Activated naive CD4-positive, alpha-beta T cell treated with anti-CD3 and anti-CD28 coated beads for 36 hours (primary cell): ENCODE measurements at regions of chr11 and their contacts with region 1.

Region 1: GRCh38 chr11:46616998-46617675 is at the starts of genes ATG13 and HARBI1:
- DNase-seq: peak; percentile 90
- H3K4me3 Mint-ChIP-seq: peak within 1 kb of the TSS; percentile 89
- H3K27ac Mint-ChIP-seq: peak within 1 kb of the TSS; percentile 99
- H3K4me1 Mint-ChIP-seq: peaks cover 40% of the 10 kb centered on the region
- H3K27me3 Mint-ChIP-seq: no peaks in the 10 kb centered on the region
- total RNA-seq, gene ATG13: 54.7 to 55.6 TPM
- total RNA-seq, gene HARBI1: 2.8 to 3.1 TPM

Region 2: GRCh38 chr11:45917623-45918330 is 699.4 kb before region 1 on chr11 and contains the start of gene PEX16:
- CTCF ChIA-PET with region 1: no interaction called
- intact Hi-C with region 1: loop called (anchors 1 kb)
- DNase-seq: peak; percentile 96
- H3K4me3 Mint-ChIP-seq: peak within 1 kb of the TSS; percentile 88
- H3K27ac Mint-ChIP-seq: peak within 1 kb of the TSS; percentile 96
- H3K4me1 Mint-ChIP-seq: peaks cover 24% of the 10 kb centered on the region
- H3K27me3 Mint-ChIP-seq: peaks cover 3% of the 10 kb centered on the region
- total RNA-seq, gene PEX16: 28.6 to 32.5 TPM

Region 3: DNA sequence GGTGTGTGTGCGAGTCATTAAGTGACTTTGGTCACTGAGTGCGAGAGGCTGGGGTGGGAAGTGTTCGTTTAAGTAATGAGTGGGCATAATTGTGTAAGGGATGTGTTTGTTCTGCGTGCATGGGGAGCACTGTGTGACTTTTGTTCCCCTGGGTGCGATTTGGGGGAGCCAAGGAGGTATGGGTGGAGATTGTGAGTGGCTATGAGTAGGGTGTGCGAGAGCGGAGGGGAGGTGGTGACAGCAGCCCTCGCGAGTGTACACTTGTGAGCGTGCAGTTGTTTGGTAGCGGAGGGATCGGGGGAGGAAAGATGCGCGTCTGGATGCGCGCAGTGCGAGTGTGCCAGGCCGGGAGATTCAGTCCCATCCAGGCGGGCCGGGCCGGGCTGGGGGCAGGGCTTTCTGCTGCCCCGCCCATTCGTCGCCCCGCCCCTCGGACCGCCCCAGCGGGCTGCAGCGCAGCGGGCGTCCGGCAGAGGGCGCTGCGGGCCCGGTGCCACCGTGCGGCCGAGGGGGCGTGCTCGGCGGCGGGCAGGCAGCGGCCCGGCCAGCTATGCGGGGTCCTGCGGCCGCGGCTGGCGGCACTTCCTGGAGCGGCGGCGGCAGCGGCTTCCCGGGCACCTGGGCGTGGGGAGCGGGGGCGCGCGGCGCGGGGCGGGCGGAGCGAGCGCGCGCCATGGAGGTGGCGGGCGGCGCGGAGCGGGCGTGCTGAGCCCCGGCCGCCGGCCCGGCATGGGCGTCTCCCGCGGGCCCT is 270.1 kb before region 1 on chr11 and contains the start of gene DGKZ:
- CTCF ChIA-PET with region 1: interaction called, 7 read pairs
- intact Hi-C with region 1: loop called (anchors 1 kb)
- DNase-seq: peak; percentile 86
- H3K4me3 Mint-ChIP-seq: peak within 1 kb of the TSS; percentile 84
- H3K27ac Mint-ChIP-seq: peak within 1 kb of the TSS; percentile 92
- H3K4me1 Mint-ChIP-seq: peaks cover 80% of the 10 kb centered on the region
- H3K27me3 Mint-ChIP-seq: no peaks in the 10 kb centered on the region
- total RNA-seq, gene DGKZ: 82.9 to 89.2 TPM

Region 4: DNA sequence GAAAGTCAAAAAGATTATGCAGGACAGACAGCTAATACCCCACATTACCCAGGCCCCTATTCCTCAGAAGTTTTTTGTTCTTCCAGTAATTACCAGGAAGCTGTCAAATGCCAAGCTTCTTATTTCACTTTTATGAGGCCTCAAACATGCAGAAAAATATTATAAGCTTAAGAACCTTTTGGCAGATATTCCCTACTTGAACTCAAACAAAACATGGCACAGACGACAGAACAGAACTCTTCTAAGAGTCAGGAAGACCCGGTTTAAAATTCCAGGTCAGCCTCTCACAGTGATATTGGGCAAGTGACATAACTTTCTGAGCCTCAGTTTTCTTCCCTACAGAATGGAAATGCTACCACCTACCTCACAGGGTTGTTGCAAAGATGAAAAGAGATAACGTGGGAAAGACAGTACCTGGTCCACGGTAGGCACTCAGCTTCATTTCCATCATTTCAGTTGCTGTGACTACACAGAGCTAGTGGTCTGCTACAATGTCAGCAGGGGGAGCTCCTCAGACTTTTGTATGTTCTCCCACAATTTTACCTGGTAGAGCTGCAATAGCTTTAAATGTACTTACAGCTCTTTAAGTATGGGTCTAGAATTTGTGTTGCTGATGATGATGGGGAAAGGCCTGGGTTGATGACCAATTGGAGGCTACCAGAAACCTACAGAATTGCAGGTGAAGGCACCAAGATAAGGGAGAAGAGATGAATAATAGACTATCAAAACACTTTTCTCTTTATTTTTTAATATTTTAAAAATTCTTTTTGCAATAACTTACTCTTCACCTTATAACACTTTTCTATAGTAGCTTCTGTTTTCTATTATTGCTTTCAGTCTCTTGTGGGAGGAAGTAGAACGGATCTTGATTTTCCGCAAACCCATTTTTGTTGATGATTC is 127.2 kb before region 1 on chr11:
- CTCF ChIA-PET with region 1: interaction called, 11 read pairs
- intact Hi-C with region 1: loop called (anchors 1 kb)
- DNase-seq: peak; percentile 45
- H3K4me3 Mint-ChIP-seq: no peak overlapping the region
- H3K27ac Mint-ChIP-seq: no peak overlapping the region
- H3K4me1 Mint-ChIP-seq: no peaks in the 10 kb centered on the region
- H3K27me3 Mint-ChIP-seq: no peaks in the 10 kb centered on the region

Region 5: GRCh38 chr11:46560300-46560991 is 56.7 kb before region 1 on chr11:
- CTCF ChIA-PET with region 1: interaction called, 11 read pairs
- intact Hi-C with region 1: loop called (anchors 1 kb)
- DNase-seq: peak; percentile 52
- H3K4me3 Mint-ChIP-seq: peak overlapping the region; percentile 75
- H3K27ac Mint-ChIP-seq: peak overlapping the region; percentile 82
- H3K4me1 Mint-ChIP-seq: peaks cover 61% of the 10 kb centered on the region
- H3K27me3 Mint-ChIP-seq: no peaks in the 10 kb centered on the region

Region 6: GRCh38 chr11:46700241-46701077 is 83.3 kb after region 1 on chr11 and contains the starts of genes ARHGAP1 and ZNF408:
- CTCF ChIA-PET with region 1: no interaction called
- intact Hi-C with region 1: loop called (anchors 1 kb)
- DNase-seq: peak; percentile 100
- H3K4me3 Mint-ChIP-seq: peak within 1 kb of the TSS; percentile 97
- H3K27ac Mint-ChIP-seq: peak within 1 kb of the TSS; percentile 97
- H3K4me1 Mint-ChIP-seq: peaks cover 45% of the 10 kb centered on the region
- H3K27me3 Mint-ChIP-seq: no peaks in the 10 kb centered on the region
- total RNA-seq, gene ARHGAP1: 31.2 to 32.6 TPM
- total RNA-seq, gene ZNF408: 7.3 to 7.6 TPM

Region 7: DNA sequence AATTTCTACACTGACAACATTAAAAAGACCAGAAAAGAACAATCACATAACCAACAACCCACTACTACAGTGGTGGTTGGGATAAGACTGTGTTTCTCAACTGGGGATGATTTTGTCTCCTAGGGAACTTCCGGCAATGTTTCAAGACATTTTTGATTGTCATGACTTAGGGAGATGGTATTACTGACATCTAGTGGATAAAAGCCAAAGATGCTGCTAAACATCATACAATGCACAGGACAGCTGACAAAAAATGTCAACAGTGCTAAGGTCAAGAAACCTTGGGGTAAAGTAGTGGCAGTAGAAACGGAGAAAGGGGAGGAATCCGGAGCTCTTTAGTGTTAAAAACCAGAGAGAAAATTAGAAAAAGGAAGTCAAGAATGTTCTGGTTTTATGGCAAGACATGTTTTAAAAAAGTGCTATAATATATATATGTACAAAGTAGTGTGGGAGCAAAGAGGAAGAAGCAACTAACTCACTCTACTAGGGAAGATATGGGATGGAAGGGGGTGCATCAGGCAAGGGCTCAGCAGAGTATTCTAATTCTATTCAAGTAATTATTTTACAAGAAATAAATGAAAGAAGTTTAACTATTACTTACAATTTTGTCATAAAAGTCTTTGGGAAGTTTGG is 191.8 kb after region 1 on chr11:
- CTCF ChIA-PET with region 1: no interaction called
- intact Hi-C with region 1: no loop called
- DNase-seq: no peak
- H3K4me3 Mint-ChIP-seq: no peak overlapping the region
- H3K27ac Mint-ChIP-seq: no peak overlapping the region
- H3K4me1 Mint-ChIP-seq: peaks cover 4% of the 10 kb centered on the region
- H3K27me3 Mint-ChIP-seq: no peaks in the 10 kb centered on the region

Region 8: GRCh38 chr11:47269002-47269828 is 652.1 kb after region 1 on chr11:
- CTCF ChIA-PET with region 1: no interaction called
- intact Hi-C with region 1: loop called (anchors 1 kb)
- DNase-seq: peak; percentile 91
- H3K4me3 Mint-ChIP-seq: peak overlapping the region; percentile 85
- H3K27ac Mint-ChIP-seq: peak overlapping the region; percentile 98
- H3K4me1 Mint-ChIP-seq: peaks cover 55% of the 10 kb centered on the region
- H3K27me3 Mint-ChIP-seq: no peaks in the 10 kb centered on the region